Adrenal gland (tissue), 19 donors: ENCODE measurements at regions of chr3 and their contacts with region 1.

Region 1: GRCh38 chr3:185552358-185552877 is at the start of gene LIPH:
- DNase-seq: no peak
- H3K4me3 ChIP-seq: no peak within 1 kb of the TSS
- H3K27ac ChIP-seq: no peak within 1 kb of the TSS
- H3K4me1 ChIP-seq: peaks cover 0 to 7% of the 10 kb centered on the region in 2 donors
- H3K27me3 ChIP-seq: no peaks in the 10 kb centered on the region
- CTCF ChIP-seq: no peak
- POLR2A ChIP-seq: no peak
- total RNA-seq, gene LIPH: 0.32 to 11.2 (median 0.99) TPM in 8 of 9 donors, not detected in the other

Region 2: GRCh38 chr3:184874709-184875644 is 677.4 kb before region 1 on chr3:
- intact Hi-C with region 1: no loop called
- DNase-seq: peak in 3 of 7 donors; percentile 13 to 59 (median 25)
- H3K4me3 ChIP-seq: no peak overlapping the region
- H3K27ac ChIP-seq: no peak overlapping the region
- H3K4me1 ChIP-seq: no peaks in the 10 kb centered on the region
- H3K27me3 ChIP-seq: no peaks in the 10 kb centered on the region
- CTCF ChIP-seq: peak in 5 of 6 experiments; percentile 55 to 76 (median 65)
- POLR2A ChIP-seq: no peak

Region 3: GRCh38 chr3:185508335-185508991 is 44.0 kb before region 1 on chr3:
- intact Hi-C with region 1: loop called in 1 of 2 experiments (anchors 10 kb)
- DNase-seq: no peak
- H3K4me3 ChIP-seq: no peak overlapping the region
- H3K27ac ChIP-seq: no peak overlapping the region
- H3K4me1 ChIP-seq: peaks cover 0 to under 1% of the 10 kb centered on the region in 2 donors
- H3K27me3 ChIP-seq: no peaks in the 10 kb centered on the region
- CTCF ChIP-seq: no peak
- POLR2A ChIP-seq: no peak

Region 4: DNA sequence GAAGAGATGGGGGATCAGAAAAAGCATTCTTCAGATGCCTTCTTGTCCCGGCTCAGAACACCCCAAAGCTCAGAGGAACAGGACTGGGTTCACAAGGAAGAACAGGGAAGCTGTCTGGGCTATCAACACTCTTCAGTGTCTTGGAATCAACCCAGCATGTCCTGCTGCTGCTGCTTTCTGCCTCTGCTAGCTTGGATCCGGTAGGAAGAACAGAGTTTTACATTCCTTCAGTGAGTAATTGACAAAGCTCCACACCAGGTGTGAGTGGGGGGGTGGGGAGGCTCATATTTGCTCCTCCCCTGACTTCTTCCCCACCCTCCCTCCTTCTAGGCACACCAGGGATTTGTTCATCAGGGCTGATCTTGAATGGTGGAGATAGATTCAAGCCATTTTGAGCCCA is 569.5 kb after region 1 on chr3:
- intact Hi-C with region 1: no loop called
- DNase-seq: no peak
- H3K4me3 ChIP-seq: no peak overlapping the region
- H3K27ac ChIP-seq: no peak overlapping the region
- H3K4me1 ChIP-seq: no peaks in the 10 kb centered on the region
- H3K27me3 ChIP-seq: no peaks in the 10 kb centered on the region
- CTCF ChIP-seq: no peak
- POLR2A ChIP-seq: no peak